Left ventricle myocardium superior (tissue), 1 donor: ENCODE measurements at regions of chr1 and their contacts with region 1.

Region 1: GRCh38 chr1:153352523-153352922 is 3.9 kb upstream of the PGLYRP4 start:
- DNase-seq: peak; percentile 75
- ATAC-seq: peak; percentile 84

Region 2: GRCh38 chr1:153494976-153495535 is 142.5 kb after region 1 on chr1:
- intact Hi-C with region 1: loop called (anchors 2 kb)
- DNase-seq: peak; percentile 89
- ATAC-seq: peak; percentile 64